GM23248 (cell line): ENCODE measurements at regions of chr5 and their contacts with region 1.

Region 1: DNA sequence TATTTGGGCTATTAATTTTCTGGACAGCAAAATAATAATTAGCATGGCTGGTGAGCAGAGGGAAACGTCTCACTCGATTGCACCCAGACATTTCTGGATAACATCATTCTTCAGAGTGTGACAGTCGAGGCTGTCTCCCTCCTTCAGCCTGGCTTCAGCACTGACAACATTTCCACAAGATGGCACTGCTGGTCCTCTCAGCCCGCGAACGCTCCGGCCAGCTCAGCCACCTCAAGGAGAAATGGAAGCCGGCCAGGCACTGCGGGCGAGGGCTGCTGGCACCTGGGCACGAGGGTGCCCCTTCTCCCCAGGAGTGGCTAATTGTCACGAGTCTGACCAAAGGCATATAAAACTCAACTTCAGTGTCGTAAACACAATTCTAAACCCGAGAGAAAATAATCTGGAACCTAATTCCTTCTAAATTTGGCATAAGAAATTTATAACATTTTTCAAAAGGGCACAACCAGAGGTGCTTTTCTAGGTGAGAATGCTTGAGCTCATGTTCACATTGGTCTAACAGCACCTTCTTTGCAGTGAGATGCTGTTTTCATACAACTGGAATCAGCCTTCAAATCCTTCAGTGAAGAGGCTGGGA is 65.9 kb downstream of the DAP start:
- DNase-seq: peak; percentile 90
- H3K4me3 ChIP-seq: peak overlapping the region; percentile 35
- H3K27ac ChIP-seq: peak overlapping the region; percentile 61
- H3K4me1 ChIP-seq: peaks cover 51% of the 10 kb centered on the region
- H3K27me3 ChIP-seq: no peaks in the 10 kb centered on the region

Region 2: GRCh38 chr5:10288600-10289213 is 406.4 kb before region 1 on chr5:
- in situ Hi-C with region 1: no loop called
- DNase-seq: no peak
- H3K4me3 ChIP-seq: no peak overlapping the region
- H3K27ac ChIP-seq: no peak overlapping the region
- H3K4me1 ChIP-seq: peaks cover 3% of the 10 kb centered on the region; the same call in 1 of the 2 replicates
- H3K27me3 ChIP-seq: no peaks in the 10 kb centered on the region

Region 3: DNA sequence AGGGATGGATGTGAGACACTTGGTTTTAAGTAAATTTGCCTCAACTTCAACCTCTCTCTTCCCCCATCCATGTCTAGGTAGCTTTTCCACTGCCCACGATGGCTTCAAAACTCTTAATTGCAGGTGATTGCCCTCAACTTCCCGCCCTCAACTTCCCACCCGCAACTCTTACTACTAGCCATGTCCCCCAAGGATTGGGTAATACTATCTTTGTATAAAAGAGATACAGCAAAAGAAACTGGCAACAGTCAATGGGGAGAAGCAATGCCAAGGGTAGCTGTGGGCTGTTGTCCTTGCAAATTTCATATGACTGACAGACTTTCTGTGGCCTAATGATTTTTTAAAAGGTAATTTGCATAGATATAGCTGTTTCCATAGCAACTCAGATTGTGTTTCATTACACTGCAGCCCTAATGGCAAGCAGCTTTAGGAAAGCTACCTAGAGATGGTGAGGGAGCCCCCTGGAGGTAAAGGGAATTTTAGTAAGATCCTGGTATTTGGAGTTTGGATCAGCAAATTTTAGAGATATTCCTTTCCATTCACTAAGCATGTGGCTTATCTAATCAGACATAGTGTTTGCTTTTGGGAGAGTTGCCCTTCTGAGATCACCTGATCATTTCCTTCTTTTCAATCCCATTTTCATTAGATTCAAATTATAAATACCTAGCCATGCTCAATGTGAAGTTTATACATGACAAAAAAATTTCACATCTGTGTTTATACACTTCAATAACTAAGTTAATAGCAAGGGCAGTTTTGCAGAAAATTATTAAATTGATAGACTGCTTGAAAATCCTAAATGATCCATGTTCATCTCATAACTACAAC is 487.5 kb after region 1 on chr5:
- in situ Hi-C with region 1: loop called (anchors 25 kb)
- DNase-seq: peak; percentile 66
- H3K4me3 ChIP-seq: no peak overlapping the region
- H3K27ac ChIP-seq: no peak overlapping the region
- H3K4me1 ChIP-seq: no peaks in the 10 kb centered on the region
- H3K27me3 ChIP-seq: peaks cover 11% of the 10 kb centered on the region; the same call in 1 of the 2 replicates

Region 4: DNA sequence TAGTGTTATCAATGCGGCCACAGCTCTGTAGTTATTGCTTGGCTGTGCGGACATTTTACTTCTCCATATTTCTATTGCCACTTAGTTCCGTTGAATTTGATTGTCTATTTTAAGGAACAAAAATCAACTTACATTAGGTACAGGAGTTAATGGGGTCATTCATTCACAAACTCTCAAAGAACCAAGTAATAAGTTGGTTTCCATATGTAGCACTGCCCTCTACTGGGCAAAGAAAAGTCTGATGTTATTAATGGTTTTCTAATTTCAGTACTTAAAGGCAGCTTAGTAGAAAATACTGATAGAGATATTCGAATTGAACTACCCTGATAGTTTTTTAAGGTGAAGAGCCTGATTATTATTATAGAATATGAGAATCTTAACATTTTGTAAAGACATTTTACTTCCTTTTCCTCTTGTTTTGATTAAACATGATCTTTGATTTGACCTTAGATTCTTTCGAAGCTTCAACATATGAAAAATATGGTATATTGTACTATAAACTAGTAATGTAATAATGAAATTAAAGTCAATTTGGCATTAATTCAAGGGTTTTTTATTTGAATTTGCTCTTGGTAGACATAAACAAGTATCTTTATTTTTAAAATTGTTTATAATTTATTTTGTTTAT is 1328.6 kb after region 1 on chr5:
- in situ Hi-C with region 1: loop called (anchors 25 kb)
- DNase-seq: peak; percentile 48
- H3K4me3 ChIP-seq: no peak overlapping the region
- H3K27ac ChIP-seq: no peak overlapping the region
- H3K4me1 ChIP-seq: no peaks in the 10 kb centered on the region
- H3K27me3 ChIP-seq: no peaks in the 10 kb centered on the region